Activated CD4-positive, alpha-beta T cell treated with anti-CD3 and anti-CD28 coated beads for 36 hours (primary cell): ENCODE measurements at regions of chr19 and their contacts with region 1.

Region 1: GRCh38 chr19:45283443-45284033 is 32.5 kb downstream of the MARK4 start:
- DNase-seq: no peak
- ATAC-seq: no peak
- H3K4me3 Mint-ChIP-seq: no peak overlapping the region
- H3K27ac Mint-ChIP-seq: no peak overlapping the region
- H3K4me1 Mint-ChIP-seq: no peaks in the 10 kb centered on the region
- H3K27me3 Mint-ChIP-seq: no peaks in the 10 kb centered on the region

Region 2: GRCh38 chr19:44848036-44848811 is 435.3 kb before region 1 on chr19:
- CTCF ChIA-PET with region 1: no interaction called
- POLR2A ChIA-PET with region 1: no interaction called
- intact Hi-C with region 1: no loop called
- DNase-seq: peak; percentile 14
- ATAC-seq: no peak
- H3K4me3 Mint-ChIP-seq: no peak overlapping the region
- H3K27ac Mint-ChIP-seq: no peak overlapping the region
- H3K4me1 Mint-ChIP-seq: peaks cover 21% of the 10 kb centered on the region
- H3K27me3 Mint-ChIP-seq: peaks cover 21% of the 10 kb centered on the region

Region 3: DNA sequence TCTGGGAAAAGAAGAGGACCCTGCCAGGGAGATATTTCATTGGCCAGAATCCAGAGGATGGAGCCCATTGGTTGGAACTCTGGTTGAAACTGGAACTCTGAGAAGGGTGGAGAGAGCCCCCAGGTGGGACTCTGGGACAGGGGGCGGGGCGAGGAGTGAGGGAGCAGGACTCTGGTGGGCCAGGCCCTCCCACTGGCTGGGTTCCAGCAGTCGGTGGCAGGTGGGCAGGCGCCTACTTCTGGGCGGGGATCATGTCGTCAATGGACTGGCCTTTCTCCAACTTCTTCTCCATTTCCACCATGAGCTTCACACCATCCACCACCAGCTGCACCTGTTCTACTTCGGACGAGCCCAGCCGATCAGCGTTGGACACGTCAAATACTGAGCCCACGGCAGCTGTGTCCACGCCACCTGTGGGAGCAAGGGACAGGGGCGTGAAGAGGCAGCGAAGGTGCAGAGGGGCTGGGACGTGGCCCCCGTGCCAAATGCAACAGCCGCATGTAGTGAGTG is 23.0 kb after region 1 on chr19:
- CTCF ChIA-PET with region 1: no interaction called
- POLR2A ChIA-PET with region 1: no interaction called
- intact Hi-C with region 1: loop called in 1 of 2 experiments (anchors 1 kb)
- DNase-seq: no peak
- ATAC-seq: no peak
- H3K4me3 Mint-ChIP-seq: no peak overlapping the region
- H3K27ac Mint-ChIP-seq: no peak overlapping the region
- H3K4me1 Mint-ChIP-seq: no peaks in the 10 kb centered on the region
- H3K27me3 Mint-ChIP-seq: no peaks in the 10 kb centered on the region